Heart left ventricle (tissue), 16 donors: ENCODE measurements at regions of chr16 and their contacts with region 1.

Region 1: DNA sequence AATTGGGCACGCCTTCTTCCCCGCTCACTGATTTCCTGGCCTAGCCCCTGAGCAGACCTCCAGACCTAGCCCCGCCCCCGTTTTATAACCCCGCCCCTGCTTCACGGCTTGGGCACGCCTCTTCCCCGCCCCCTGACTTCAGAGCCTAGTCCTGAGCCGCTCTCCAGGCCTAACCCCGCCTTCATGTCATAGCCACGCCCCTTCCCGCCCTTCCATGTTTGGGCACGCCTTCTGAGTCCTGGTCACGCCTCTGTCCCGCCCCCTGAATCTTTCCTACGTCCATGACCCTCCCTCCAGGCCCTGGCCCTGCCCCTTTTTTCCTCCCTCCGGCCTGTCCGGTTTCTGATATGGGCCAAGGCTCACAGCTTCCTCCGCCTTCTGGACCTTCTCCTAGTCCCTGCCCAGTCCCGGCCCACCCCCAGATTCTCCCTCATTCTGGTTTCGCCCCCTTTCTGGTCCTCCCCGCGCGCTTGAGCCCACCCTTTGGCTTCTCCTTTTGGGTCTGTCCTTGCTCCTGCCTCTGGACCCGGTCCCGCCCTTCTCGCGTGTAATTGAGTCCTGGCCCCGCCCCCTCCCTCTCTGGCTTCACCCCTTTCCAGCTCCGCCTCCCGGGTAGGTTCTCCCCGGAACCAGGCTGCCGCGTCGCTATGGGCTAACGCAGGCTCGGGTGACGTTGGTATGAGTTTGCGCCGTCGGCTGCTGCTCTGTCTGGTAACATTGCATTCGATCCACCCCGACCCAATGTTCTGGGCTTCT is 15.1 kb upstream of the EEF2K start:
- DNase-seq: peak; percentile 100
- ATAC-seq: peak; percentile 78 to 87 (median 86)
- H3K4me3 ChIP-seq: peak overlapping the region in 11 of 12 donors; percentile 34 to 94 (median 78)
- H3K27ac ChIP-seq: peak overlapping the region; percentile 90 to 99 (median 96)
- H3K4me1 ChIP-seq: peaks cover 4 to 54% (median 29%) of the 10 kb centered on the region in 12 donors
- H3K27me3 ChIP-seq: no peaks in the 10 kb centered on the region
- CTCF ChIP-seq: no peak
- POLR2A ChIP-seq: peak in 1 of 2 donors; percentile 85

Region 2: GRCh38 chr16:21158208-21159110 is 1032.5 kb before region 1 on chr16 and contains the start of gene LDAF1:
- intact Hi-C with region 1: loop called in 1 of 10 experiments (anchors 10 kb)
- DNase-seq: peak; percentile 85 to 93 (median 88)
- ATAC-seq: peak; percentile 81 to 93 (median 90)
- H3K4me3 ChIP-seq: peak within 1 kb of the TSS; percentile 74 to 95 (median 88)
- H3K27ac ChIP-seq: peak within 1 kb of the TSS; percentile 72 to 94 (median 88)
- H3K4me1 ChIP-seq: peaks cover 17 to 59% (median 40%) of the 10 kb centered on the region in 12 donors
- H3K27me3 ChIP-seq: no peaks in the 10 kb centered on the region
- CTCF ChIP-seq: peak in 3 of 12 donors; percentile 12 to 14 (median 13)
- POLR2A ChIP-seq: peak in 1 of 2 donors; percentile 69
- total RNA-seq, gene LDAF1: 87.0 to 334 (median 162) TPM

Region 3: GRCh38 chr16:21952793-21953540 is 238.0 kb before region 1 on chr16 and contains the start of gene UQCRC2:
- intact Hi-C with region 1: loop called in 6 of 10 experiments (anchors 1 to 5 kb)
- DNase-seq: peak; percentile 89 to 93 (median 91)
- ATAC-seq: peak; percentile 95 to 97 (median 96)
- H3K4me3 ChIP-seq: peak within 1 kb of the TSS; percentile 52 to 97 (median 84)
- H3K27ac ChIP-seq: peak within 1 kb of the TSS; percentile 94 to 99 (median 97)
- H3K4me1 ChIP-seq: peaks cover 0 to 61% (median 40%) of the 10 kb centered on the region in 12 donors
- H3K27me3 ChIP-seq: no peaks in the 10 kb centered on the region
- CTCF ChIP-seq: no peak
- POLR2A ChIP-seq: peak; percentile 11 to 63
- total RNA-seq, gene UQCRC2: 458 to 1,082 (median 779) TPM

Region 4: DNA sequence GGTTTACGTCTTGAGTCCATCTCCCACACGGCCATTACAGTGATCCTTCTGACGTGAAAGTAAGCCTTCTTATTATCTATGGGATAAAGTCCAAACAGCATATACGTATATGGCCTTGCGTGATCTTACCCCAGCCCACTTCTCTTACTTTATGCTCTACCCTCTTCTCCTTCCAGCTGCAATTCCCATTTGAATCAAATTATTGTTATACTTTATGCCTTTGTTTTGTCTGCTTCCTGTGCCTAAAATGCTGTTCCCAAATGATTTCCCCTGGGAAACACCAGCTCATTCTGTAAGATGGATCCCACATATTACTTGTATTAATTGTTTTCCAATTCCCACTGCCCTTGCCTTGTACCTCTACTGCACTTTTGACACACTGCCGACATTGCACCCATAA is 226.6 kb before region 1 on chr16:
- intact Hi-C with region 1: no loop called
- DNase-seq: no peak
- ATAC-seq: peak in 1 of 4 donors; percentile 76
- H3K4me3 ChIP-seq: no peak overlapping the region
- H3K27ac ChIP-seq: peak overlapping the region in 9 of 12 donors; percentile 6 to 67 (median 41)
- H3K4me1 ChIP-seq: peaks cover 0 to 20% (median 3%) of the 10 kb centered on the region in 12 donors
- H3K27me3 ChIP-seq: no peaks in the 10 kb centered on the region
- CTCF ChIP-seq: no peak
- POLR2A ChIP-seq: no peak

Region 5: GRCh38 chr16:22007509-22008214 is 183.3 kb before region 1 on chr16 and contains the start of gene MOSMO:
- intact Hi-C with region 1: loop called in 5 of 10 experiments (anchors 2 to 5 kb)
- DNase-seq: peak; percentile 81 to 88 (median 81)
- ATAC-seq: peak; percentile 84 to 97 (median 94)
- H3K4me3 ChIP-seq: peak within 1 kb of the TSS; percentile 55 to 100 (median 94)
- H3K27ac ChIP-seq: peak within 1 kb of the TSS; percentile 42 to 97 (median 90)
- H3K4me1 ChIP-seq: peaks cover 0 to 44% (median 25%) of the 10 kb centered on the region in 12 donors
- H3K27me3 ChIP-seq: no peaks in the 10 kb centered on the region
- CTCF ChIP-seq: peak in 3 of 12 donors; percentile 17 to 38 (median 36)
- POLR2A ChIP-seq: peak in 1 of 2 donors; percentile 56
- total RNA-seq, gene MOSMO: 8.7 to 15.0 (median 11.7) TPM

Region 6: GRCh38 chr16:22098405-22099255 is 92.3 kb before region 1 on chr16:
- intact Hi-C with region 1: loop called in 2 of 10 experiments (anchors 5 to 10 kb)
- DNase-seq: no peak
- ATAC-seq: peak in 3 of 4 donors; percentile 51 to 72 (median 67)
- H3K4me3 ChIP-seq: no peak overlapping the region
- H3K27ac ChIP-seq: no peak overlapping the region
- H3K4me1 ChIP-seq: peaks cover 0 to 3% (median 0%) of the 10 kb centered on the region in 12 donors
- H3K27me3 ChIP-seq: peaks cover 0 to 3% (median 0%) of the 10 kb centered on the region in 9 donors
- CTCF ChIP-seq: peak; percentile 40 to 70 (median 56)
- POLR2A ChIP-seq: no peak

Region 7: GRCh38 chr16:22141746-22142145 is 49.2 kb before region 1 on chr16:
- intact Hi-C with region 1: no loop called
- DNase-seq: no peak
- ATAC-seq: no peak
- H3K4me3 ChIP-seq: no peak overlapping the region
- H3K27ac ChIP-seq: no peak overlapping the region
- H3K4me1 ChIP-seq: no peaks in the 10 kb centered on the region
- H3K27me3 ChIP-seq: no peaks in the 10 kb centered on the region
- CTCF ChIP-seq: peak in 5 of 12 donors; percentile 9 to 21 (median 11)
- POLR2A ChIP-seq: no peak

Region 8: GRCh38 chr16:22225060-22225459 is 34.1 kb after region 1 on chr16:
- intact Hi-C with region 1: no loop called
- DNase-seq: peak in 2 of 5 donors; percentile 31 to 35
- ATAC-seq: no peak
- H3K4me3 ChIP-seq: no peak overlapping the region
- H3K27ac ChIP-seq: peak overlapping the region in 1 of 12 donors; percentile 56
- H3K4me1 ChIP-seq: peaks cover 0 to 14% (median 5%) of the 10 kb centered on the region in 12 donors
- H3K27me3 ChIP-seq: no peaks in the 10 kb centered on the region
- CTCF ChIP-seq: no peak
- POLR2A ChIP-seq: no peak

Region 9: DNA sequence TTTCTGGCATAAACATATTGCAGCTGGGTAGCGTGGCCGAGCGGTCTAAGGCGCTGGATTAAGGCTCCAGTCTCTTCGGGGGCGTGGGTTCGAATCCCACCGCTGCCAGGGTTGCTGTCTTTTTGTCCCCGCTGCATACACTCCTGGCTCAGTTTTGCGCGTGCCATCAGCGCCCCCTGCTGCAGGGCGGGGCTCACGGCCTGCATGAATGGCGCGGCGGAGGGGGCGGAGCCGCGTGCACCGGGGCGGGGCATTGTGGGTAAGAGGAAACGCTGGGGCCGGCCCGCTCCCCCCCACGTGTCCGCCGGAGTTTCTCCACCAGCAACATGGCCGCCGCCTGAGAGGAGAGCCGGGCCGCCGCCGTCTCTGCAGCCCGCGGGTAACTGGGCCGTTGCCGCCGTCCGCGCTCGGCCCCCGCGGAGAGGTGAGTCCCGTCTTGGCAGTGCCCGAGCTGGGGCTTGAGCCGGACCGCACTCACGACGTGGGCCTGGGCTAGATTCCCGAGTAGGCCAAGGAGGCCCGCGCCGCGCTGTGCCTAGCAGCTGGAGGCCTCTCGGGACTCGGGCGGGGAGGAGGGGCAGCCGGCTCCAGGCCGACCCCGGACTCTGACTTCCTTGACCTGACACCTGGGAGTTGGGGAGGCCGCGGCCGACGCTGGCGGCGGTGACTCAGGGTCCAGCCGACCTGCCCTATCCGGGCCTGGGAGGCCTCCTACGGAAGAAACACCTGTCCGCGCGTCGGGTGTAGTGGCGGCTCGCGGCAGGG is 106.3 kb after region 1 on chr16 and contains the start of gene POLR3E:
- intact Hi-C with region 1: loop called in 8 of 10 experiments (anchors 1 to 5 kb)
- DNase-seq: peak; percentile 99 to 100 (median 99)
- ATAC-seq: peak; percentile 94 to 96 (median 96)
- H3K4me3 ChIP-seq: peak within 1 kb of the TSS; percentile 67 to 97 (median 82)
- H3K27ac ChIP-seq: peak within 1 kb of the TSS; percentile 81 to 94 (median 90)
- H3K4me1 ChIP-seq: peaks cover 0 to 33% (median 14%) of the 10 kb centered on the region in 12 donors
- H3K27me3 ChIP-seq: no peaks in the 10 kb centered on the region
- CTCF ChIP-seq: peak; percentile 91 to 99 (median 95)
- POLR2A ChIP-seq: peak in 1 of 2 donors; percentile 61
- total RNA-seq, gene POLR3E: 27.7 to 72.6 (median 31.3) TPM

Region 10: GRCh38 chr16:23149349-23149996 is 958.5 kb after region 1 on chr16 and contains the start of gene USP31:
- intact Hi-C with region 1: loop called in 1 of 10 experiments (anchors 10 kb)
- DNase-seq: peak; percentile 97 to 98 (median 98)
- ATAC-seq: peak; percentile 98 to 99 (median 98)
- H3K4me3 ChIP-seq: peak within 1 kb of the TSS; percentile 65 to 95 (median 80)
- H3K27ac ChIP-seq: peak within 1 kb of the TSS; percentile 72 to 94 (median 83)
- H3K4me1 ChIP-seq: peaks cover 4 to 49% (median 34%) of the 10 kb centered on the region in 12 donors
- H3K27me3 ChIP-seq: no peaks in the 10 kb centered on the region
- CTCF ChIP-seq: no peak
- POLR2A ChIP-seq: no peak
- total RNA-seq, gene USP31: 19.1 to 49.9 (median 23.8) TPM